GM12878 (cell line): ENCODE measurements at regions of chr18 and their contacts with region 1.

Region 1: DNA sequence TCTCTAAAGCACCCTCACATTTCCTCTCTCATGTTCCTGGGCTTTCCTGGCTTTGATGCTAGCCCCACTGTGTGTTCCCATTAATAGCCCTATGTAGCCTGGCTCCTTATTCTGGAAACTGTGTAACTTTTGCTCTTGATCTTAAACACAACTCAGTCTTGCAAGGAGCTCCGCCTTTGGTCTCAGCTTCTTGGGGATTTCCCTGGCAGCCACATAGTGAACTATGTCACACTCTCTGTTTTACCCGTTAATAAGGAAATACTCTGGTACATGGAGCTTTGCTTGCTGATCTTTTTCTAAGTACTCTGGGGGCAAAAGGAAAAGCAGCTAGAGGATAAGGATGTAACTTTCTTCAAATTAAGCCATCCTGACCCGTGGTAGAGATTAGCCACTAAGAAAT is 259.3 kb downstream of the NEDD4L start:
- DNase-seq: no peak
- ATAC-seq: peak; percentile 98
- H3K4me3 ChIP-seq: no peak overlapping the region
- H3K27ac ChIP-seq: peak overlapping the region; percentile 8; the same call in 1 of the 2 replicates
- H3K4me1 ChIP-seq: peaks cover 13% of the 10 kb centered on the region
- H3K27me3 ChIP-seq: no peaks in the 10 kb centered on the region
- CTCF ChIP-seq: no peak
- EP300 ChIP-seq: no peak
- POLR2A ChIP-seq: no peak
- RAD21 ChIP-seq: no peak

Region 2: GRCh38 chr18:58288922-58289797 is 14.2 kb before region 1 on chr18:
- CTCF ChIA-PET with region 1: interaction called, 14 read pairs
- POLR2A ChIA-PET with region 1: interaction called, 43 read pairs
- RAD21 ChIA-PET with region 1: interaction called, 31 read pairs
- SMC1A ChIA-PET with region 1: interaction called, 82 read pairs
- in situ Hi-C with region 1: no loop called
- intact Hi-C with region 1: no loop called
- DNase-seq: no peak
- ATAC-seq: peak; percentile 90
- H3K4me3 ChIP-seq: no peak overlapping the region
- H3K27ac ChIP-seq: no peak overlapping the region
- H3K4me1 ChIP-seq: peaks cover 12% of the 10 kb centered on the region; the same call in 1 of the 2 replicates
- H3K27me3 ChIP-seq: no peaks in the 10 kb centered on the region
- CTCF ChIP-seq: no peak
- EP300 ChIP-seq: no peak
- POLR2A ChIP-seq: no peak
- RAD21 ChIP-seq: no peak

Region 3: GRCh38 chr18:58316396-58317342 is 13.3 kb after region 1 on chr18:
- CTCF ChIA-PET with region 1: interaction called, 10 read pairs
- POLR2A ChIA-PET with region 1: interaction called, 4 read pairs
- RAD21 ChIA-PET with region 1: interaction called, 11 read pairs
- SMC1A ChIA-PET with region 1: interaction called, 20 read pairs
- in situ Hi-C with region 1: no loop called
- intact Hi-C with region 1: no loop called
- DNase-seq: no peak
- ATAC-seq: peak; percentile 45
- H3K4me3 ChIP-seq: no peak overlapping the region
- H3K27ac ChIP-seq: no peak overlapping the region
- H3K4me1 ChIP-seq: peaks cover 12% of the 10 kb centered on the region
- H3K27me3 ChIP-seq: no peaks in the 10 kb centered on the region
- CTCF ChIP-seq: no peak
- EP300 ChIP-seq: no peak
- POLR2A ChIP-seq: no peak
- RAD21 ChIP-seq: no peak